ENCODE measurements at regions of chr3 and their contacts with region 1.

Region 1: DNA sequence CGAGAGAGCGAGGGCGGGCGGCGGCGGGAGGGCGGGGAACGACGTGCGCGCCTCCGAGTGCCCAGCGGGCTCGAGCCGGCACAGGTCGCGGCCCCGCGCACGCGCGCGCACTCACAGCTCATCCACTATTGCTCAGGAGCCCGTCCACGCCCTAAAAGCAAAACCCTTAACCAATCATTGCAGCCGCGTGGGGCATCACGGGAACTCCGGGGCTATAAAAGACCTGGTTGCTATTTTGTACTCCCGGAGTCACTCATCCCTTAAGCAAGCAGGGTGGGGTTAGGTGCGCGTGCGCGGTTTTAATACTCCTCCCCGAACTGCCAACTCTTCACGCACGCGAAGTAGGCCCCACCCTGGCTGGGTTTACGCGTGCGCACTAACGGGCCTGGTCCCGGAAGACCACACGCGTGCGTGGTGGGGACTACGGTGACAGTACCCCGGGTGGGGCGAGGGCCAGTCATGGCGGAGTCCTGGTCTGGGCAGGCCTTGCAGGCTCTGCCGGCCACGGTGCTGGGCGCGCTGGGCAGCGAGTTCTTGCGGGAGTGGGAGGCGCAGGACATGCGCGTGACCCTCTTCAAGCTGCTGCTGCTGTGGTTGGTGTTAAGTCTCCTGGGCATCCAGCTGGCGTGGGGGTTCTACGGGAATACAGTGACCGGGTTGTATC is at the starts of genes RHOA and TCTA:
- DNase-seq: peak; percentile 99
- total RNA-seq, gene RHOA: 340 TPM
- total RNA-seq, gene TCTA: 26.5 TPM

Region 2: DNA sequence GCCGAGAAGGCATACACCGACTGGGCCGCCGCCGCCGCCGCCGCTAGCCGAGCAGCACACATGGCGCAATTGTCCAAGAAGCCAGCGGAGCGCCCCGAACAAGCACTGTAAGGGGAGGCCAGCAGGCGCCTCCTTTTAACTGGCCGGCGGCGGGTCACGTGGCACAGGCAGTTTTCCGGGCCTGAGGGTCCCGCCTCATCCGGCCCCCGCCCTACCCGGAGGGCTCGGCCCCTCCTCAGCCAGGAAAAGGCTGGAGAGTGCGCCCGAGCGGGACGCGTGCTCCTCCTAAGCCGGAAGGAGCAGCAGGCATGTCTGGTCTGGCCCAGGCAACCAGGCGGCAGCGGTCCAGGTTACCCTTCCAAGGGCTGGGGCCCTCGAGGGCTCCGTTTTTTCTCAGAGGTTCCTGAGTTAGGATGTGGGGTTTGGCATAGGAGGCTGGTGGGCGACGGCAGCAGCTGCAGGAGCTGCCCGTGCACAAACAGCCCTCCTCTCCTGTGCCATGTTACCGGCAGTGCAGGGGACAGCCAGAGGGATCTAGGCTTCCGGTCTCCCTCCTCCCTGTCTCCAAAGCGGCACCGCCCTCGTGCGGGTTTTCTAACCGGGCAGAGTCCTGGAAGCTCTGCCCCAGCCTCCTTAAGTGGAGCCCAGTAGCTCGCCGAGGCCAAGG is 53.8 kb before region 1 on chr3 and contains the start of gene GPX1:
- intact Hi-C with region 1: loop called (anchors 2 kb)
- DNase-seq: peak; percentile 97
- total RNA-seq, gene GPX1: 106 TPM

Region 3: DNA sequence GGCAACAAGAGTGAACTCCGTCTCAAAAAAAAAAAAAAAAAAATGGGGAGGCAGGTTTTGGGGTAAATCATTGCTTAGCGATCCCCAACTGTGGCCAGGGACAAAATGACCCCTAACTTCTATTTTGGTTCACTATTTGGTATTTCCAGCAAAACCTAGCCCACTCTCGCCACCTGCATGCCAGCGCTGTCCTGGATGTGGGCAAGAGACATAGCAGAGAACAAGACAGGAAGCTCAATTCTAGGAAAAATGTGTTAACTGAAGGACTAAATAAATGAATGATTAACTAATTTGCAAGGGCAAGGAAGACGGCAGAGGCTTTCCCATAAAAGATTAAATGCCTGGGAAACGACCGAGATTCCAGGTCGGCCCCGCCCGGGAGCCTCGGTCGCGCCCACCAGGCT is 16.6 kb after region 1 on chr3:
- intact Hi-C with region 1: loop called (anchors 1 kb)
- DNase-seq: no peak

Region 4: DNA sequence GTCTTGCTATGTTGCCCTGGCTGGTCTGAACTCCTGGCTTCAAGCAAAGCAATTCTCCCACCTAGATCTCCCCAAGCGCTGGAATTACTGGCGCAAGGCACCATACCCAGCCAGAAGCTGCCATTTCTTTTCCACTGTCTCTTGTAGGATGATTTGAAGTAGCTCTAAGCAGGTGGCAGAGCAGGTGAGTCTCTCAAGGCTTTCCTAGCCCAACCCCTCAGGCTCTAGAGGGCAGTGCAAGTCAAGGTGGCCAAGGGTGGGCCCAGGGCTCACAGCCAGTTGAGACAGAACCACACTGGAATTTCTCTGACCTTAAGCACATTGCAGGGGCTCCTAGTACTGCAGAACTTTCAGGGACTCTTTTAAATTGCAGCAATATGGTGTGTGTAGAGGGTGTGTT is 42.4 kb after region 1 on chr3:
- intact Hi-C with region 1: no loop called
- DNase-seq: no peak

Measured in cardiac septum (tissue), 1 donor.